BJ (cell line): ENCODE measurements at regions of chr9 and their contacts with region 1.

Region 1: DNA sequence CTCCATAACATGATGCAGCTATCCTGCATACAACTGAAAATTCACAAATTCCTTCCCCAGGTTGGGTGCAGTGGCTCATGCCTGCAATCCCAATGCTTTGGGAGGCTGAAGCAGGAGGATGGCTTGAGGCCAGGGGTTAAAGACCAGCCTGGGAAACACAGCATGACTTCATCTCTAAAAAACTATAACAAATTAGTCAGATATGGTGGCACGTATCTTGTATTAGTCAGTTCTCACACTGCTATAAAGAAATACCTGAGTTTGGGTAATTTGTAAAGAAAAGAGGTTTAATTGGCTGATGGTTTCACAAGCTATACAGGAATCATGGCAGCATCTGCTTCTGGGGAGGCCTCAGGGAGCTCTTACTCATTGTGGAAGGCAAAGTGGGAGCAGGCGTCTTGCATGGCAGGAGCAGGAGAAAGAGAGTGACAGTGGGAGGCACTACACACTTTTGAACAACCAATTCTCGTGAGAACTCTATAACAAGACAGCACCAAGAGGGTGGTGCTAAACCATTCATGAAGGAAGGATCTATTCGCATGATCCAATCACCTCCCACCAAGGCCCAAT is 56.3 kb upstream of the DAPK1 start:
- DNase-seq: peak; percentile 22
- H3K4me3 ChIP-seq: no peak overlapping the region
- H3K27me3 ChIP-seq: no peaks in the 10 kb centered on the region
- CTCF ChIP-seq: no peak

Region 2: DNA sequence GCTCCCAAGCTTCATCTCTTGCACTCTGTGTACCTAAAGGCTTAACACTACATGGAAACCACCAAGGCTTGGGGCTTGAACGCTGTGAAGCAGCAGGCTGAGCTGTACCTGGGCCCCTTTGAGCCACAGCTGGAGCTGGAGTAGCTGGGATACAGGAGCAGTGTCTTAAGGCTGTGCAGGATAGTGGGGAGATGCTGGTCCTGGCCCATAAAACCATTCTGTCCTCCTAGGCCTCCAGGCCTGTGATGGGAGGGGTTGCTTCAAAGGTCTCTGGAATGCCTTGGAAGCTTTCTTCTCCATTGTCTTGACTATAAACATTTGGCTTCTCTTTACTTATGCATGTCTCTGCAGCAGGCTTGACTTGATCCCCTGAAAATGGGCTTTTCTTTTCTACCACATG is 14.1 kb after region 1 on chr9:
- CTCF ChIA-PET with region 1: interaction called, 4 read pairs
- POLR2A ChIA-PET with region 1: interaction called, 20 read pairs
- DNase-seq: no peak
- H3K4me3 ChIP-seq: no peak overlapping the region
- H3K27me3 ChIP-seq: no peaks in the 10 kb centered on the region; the same call in 1 of the 2 replicates
- CTCF ChIP-seq: no peak

Region 3: DNA sequence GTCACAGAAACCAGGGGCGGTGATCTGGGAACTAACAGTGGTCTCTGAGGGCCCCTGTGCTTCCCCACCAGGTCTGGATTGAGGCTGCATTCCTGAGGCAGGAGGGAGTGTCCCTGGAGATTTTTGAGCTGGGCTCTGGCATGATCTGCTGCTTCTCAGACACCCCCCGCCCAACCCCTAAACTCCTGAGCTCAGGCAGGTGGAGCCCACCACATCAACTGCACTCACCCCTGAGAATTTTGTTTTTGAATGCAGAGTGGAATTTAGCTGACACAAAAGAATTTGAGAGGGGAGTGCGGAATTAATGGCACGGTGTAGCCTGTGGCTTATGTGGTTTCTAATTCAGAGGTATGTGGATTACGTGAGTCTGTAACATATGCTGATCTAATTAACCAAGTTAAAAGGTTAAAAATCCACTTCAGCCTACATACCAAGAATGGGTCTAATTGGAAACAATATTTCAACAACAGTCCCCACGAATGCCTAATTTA is 260.6 kb after region 1 on chr9:
- CTCF ChIA-PET with region 1: no interaction called
- POLR2A ChIA-PET with region 1: no interaction called
- DNase-seq: no peak
- H3K4me3 ChIP-seq: no peak overlapping the region
- H3K27me3 ChIP-seq: no peaks in the 10 kb centered on the region
- CTCF ChIP-seq: no peak